CD14-positive monocyte (primary cell): ENCODE measurements at regions of chr18 and their contacts with region 1.

Region 1: DNA sequence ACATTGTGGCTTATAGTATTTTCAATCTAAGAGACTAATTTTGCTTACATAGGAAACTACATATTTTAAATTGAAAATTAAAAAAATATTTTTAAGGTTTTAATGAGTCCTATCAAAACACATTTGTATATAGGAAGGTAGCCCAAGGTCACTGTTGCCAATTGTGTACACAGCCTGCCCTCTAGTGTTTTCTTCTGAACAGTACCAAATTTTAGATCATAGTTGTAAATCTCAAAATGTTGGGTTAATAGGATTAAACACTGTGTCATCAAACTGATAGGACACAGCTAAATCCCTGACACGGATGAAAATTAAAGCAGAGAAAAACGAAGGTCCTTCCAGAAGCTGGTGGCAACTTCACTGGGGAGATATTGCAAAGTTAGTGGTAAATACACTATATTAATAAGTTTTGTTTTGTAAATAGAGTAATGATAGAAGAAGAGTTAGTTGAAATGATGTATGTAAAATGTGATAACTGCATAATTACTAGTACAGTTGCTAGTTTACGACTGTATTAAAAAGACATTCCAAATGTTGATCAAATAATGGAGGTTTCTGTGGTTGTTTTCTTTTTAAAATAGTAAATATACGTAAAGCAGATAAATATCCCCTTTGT is 19.7 kb downstream of the CLUL1 start:
- DNase-seq: peak; percentile 15 to 53 (median 51)
- H3K4me3 ChIP-seq: no peak overlapping the region
- H3K4me3 Mint-ChIP-seq: no peak overlapping the region
- H3K27ac ChIP-seq: no peak overlapping the region
- H3K27ac Mint-ChIP-seq: no peak overlapping the region
- H3K4me1 ChIP-seq: peaks cover 21 to 25% of the 10 kb centered on the region in 2 donors
- H3K4me1 Mint-ChIP-seq: peaks cover 20% of the 10 kb centered on the region
- H3K27me3 ChIP-seq: no peaks in the 10 kb centered on the region
- H3K27me3 Mint-ChIP-seq: peaks cover 2 to 7% (median 3%) of the 10 kb centered on the region in 3 donors
- CTCF ChIP-seq: peak; percentile 86

Region 2: DNA sequence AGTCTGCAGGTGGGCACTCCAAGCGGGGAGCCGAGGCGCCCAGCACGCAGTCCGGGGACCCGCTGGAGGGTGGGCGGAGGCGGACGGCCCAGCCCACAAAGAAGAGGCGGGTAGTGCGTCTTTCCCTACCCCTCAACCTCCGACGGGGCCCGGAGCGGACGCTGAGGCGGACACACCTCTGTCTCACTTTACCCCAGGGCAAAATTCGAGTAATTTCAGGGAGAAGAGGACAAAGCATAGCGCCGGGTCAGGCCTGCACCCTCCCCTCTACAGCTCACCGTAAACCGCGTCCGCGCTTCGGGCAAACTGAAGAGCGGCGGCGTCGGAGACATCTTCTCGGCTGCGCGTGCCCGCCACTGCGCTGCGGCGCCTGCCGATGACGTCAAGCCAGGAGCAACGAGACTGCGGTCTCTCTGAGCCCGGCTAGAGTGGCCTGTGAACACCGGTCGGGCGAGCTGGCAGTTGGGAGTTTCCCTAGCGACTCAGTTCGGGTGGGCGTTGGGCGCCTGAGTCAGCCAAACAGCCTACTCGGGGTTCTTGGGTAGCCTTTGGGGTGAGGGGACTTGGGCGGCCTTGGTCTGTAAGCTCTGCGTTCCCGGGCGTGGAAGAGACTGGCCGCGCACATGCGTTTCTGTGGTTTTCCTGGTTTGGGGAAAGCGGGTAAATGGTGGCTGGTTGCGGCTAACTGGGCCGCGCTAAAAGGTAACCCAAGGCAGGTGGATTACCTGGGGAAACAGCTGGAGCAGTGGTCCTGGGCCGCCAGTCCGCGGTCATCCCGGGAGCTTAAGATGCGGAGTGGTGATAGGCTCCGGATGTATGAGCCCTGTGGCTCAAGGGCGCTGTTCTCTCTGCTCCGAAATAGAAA is 348.6 kb before region 1 on chr18 and contains the start of gene THOC1:
- intact Hi-C with region 1: loop called in 1 of 2 experiments (anchors 5 kb)
- DNase-seq: peak; percentile 90 to 94 (median 91)
- H3K4me3 ChIP-seq: peak within 1 kb of the TSS; percentile 88 to 98 (median 93)
- H3K4me3 Mint-ChIP-seq: peak within 1 kb of the TSS; percentile 95 to 96
- H3K27ac ChIP-seq: peak within 1 kb of the TSS; percentile 93 to 99
- H3K27ac Mint-ChIP-seq: peak within 1 kb of the TSS; percentile 96 to 100 (median 99)
- H3K4me1 ChIP-seq: peaks cover 15 to 20% of the 10 kb centered on the region in 2 donors
- H3K4me1 Mint-ChIP-seq: peaks cover 23% of the 10 kb centered on the region
- H3K27me3 ChIP-seq: no peaks in the 10 kb centered on the region
- H3K27me3 Mint-ChIP-seq: peaks cover 0 to 8% (median 0%) of the 10 kb centered on the region in 3 donors
- CTCF ChIP-seq: no peak
- polyA plus RNA-seq, gene THOC1: 7.8 to 18.3 (median 8.9) TPM

Region 3: GRCh38 chr18:286515-287310 is 329.8 kb before region 1 on chr18:
- intact Hi-C with region 1: loop called (anchors 5 to 10 kb)
- DNase-seq: peak; percentile 12 to 38 (median 36)
- H3K4me3 ChIP-seq: no peak overlapping the region
- H3K4me3 Mint-ChIP-seq: no peak overlapping the region
- H3K27ac ChIP-seq: no peak overlapping the region
- H3K27ac Mint-ChIP-seq: no peak overlapping the region
- H3K4me1 ChIP-seq: peaks cover 8 to 9% of the 10 kb centered on the region in 2 donors
- H3K4me1 Mint-ChIP-seq: peaks cover 11% of the 10 kb centered on the region
- H3K27me3 ChIP-seq: no peaks in the 10 kb centered on the region
- H3K27me3 Mint-ChIP-seq: peaks cover 0 to 6% (median 2%) of the 10 kb centered on the region in 3 donors
- CTCF ChIP-seq: peak; percentile 59

Region 4: GRCh38 chr18:413233-413632 is 203.3 kb before region 1 on chr18:
- intact Hi-C with region 1: no loop called
- DNase-seq: no peak
- H3K4me3 ChIP-seq: no peak overlapping the region
- H3K4me3 Mint-ChIP-seq: no peak overlapping the region
- H3K27ac ChIP-seq: no peak overlapping the region
- H3K27ac Mint-ChIP-seq: no peak overlapping the region
- H3K4me1 ChIP-seq: peaks cover 22 to 34% of the 10 kb centered on the region in 2 donors
- H3K4me1 Mint-ChIP-seq: peaks cover 40% of the 10 kb centered on the region
- H3K27me3 ChIP-seq: no peaks in the 10 kb centered on the region
- H3K27me3 Mint-ChIP-seq: peaks cover 0 to 2% (median 0%) of the 10 kb centered on the region in 3 donors
- CTCF ChIP-seq: no peak

Region 5: DNA sequence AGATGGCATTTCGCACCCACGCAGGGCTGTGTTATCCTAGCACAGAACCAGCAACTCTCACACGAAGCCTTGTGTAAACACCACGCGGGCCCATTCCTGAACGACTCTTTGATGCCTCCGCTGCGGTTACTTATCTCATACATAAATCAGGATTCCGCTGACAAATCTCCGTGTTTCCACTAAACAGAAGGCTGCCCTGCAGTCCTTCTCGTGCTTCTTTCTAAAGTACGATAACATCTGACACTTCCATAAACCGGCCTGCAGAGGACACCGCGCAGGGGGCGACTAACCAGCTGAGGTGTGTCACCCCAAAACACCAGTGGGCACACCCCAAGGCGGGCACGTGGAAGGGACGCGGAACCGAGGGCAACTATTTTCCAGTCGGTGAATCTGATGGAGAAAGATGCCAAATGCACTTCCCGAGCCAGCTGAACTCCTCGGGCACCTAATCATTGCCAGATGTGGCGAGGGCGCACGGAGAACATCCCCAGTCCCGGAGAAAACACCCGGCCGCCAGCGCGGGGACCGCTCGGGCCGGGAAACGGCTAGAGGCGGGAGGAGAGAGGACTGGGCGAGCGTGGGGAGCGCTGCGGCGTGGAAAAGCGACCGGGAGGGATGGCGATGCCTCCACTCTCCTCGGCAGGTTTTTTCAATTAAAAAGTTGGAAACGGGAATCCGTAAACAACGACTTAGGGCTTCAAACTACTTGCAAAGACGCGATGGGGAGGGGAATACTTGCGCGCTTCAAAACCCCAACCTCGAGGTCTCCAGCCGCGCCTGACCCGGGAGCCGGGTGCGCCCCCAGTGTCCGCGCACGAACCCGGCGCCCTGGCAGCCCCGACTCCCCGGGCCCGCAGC is 116.7 kb before region 1 on chr18:
- intact Hi-C with region 1: loop called in 1 of 2 experiments (anchors 10 kb)
- DNase-seq: no peak
- H3K4me3 ChIP-seq: peak overlapping the region; percentile 17 to 77 (median 44)
- H3K4me3 Mint-ChIP-seq: peak overlapping the region; percentile 82 to 93
- H3K27ac ChIP-seq: no peak overlapping the region
- H3K27ac Mint-ChIP-seq: peak overlapping the region in 2 of 7 donors; percentile 5 to 53
- H3K4me1 ChIP-seq: peaks cover 26 to 33% of the 10 kb centered on the region in 2 donors
- H3K4me1 Mint-ChIP-seq: peaks cover 30% of the 10 kb centered on the region
- H3K27me3 ChIP-seq: peaks cover 34 to 59% of the 10 kb centered on the region in 2 donors
- H3K27me3 Mint-ChIP-seq: peaks cover 53 to 67% (median 58%) of the 10 kb centered on the region in 3 donors
- CTCF ChIP-seq: no peak